H1 (cell line): ENCODE measurements at regions of chr5 and their contacts with region 1.

Region 1: GRCh38 chr5:99060306-99061261 is 131.8 kb upstream of the CHD1 start:
- DNase-seq: peak; percentile 15 to 87
- H3K4me3 ChIP-seq: no peak overlapping the region
- H3K27ac ChIP-seq: peak overlapping the region; percentile 33; the same call in 1 of the 2 replicates
- H3K4me1 ChIP-seq: no peaks in the 10 kb centered on the region
- H3K27me3 ChIP-seq: no peaks in the 10 kb centered on the region
- CTCF ChIP-seq: peak; percentile 24 to 77 (median 75)
- EP300 ChIP-seq: no peak
- POLR2A ChIP-seq: no peak
- RAD21 ChIP-seq: peak; percentile 86 to 90

Region 2: DNA sequence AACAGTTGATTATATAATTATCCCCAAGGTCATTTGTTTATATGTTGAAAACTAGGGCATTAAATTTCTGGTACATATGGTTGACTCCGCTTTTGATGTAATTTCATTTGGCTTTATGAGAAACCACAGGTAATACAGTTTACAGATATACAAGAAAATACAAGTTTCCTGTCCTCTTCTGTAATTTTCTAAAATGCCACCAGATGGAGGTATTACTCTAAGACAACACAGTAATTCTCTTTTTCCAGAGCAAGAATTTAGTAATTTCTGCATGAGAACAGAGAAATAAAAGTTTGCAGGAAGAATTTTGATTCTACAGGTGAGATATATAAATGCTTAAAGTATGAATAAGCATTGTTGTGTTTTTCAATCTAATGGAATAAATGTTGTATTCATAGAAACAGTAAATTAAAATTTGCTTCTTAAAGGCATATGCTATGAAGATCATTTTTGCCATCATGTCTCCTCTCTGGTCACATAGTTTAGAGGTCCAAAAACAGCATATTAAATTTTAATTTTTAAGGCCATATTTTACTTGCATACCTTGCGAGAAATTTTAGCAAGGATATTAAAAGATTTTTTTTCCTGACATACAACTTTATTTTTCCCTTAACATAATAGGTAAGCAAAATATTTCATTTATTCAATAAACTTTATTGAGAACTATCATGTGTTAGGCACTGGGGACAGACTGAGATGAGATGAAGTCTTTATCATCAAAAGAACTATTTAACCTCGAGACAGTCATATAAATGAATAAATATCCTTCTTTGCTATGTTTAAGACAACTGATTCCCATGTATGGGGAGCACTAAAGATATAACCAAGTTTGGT is 154.5 kb before region 1 on chr5:
- CTCF ChIA-PET with region 1: interaction called, 22 read pairs
- POLR2A ChIA-PET with region 1: no interaction called
- DNase-seq: no peak
- H3K4me3 ChIP-seq: no peak overlapping the region
- H3K27ac ChIP-seq: no peak overlapping the region
- H3K4me1 ChIP-seq: peaks cover 0 to 3% (median 0%) of the 10 kb centered on the region in 4 experiments; a peak in 1 of 7 replicates
- H3K27me3 ChIP-seq: no peaks in the 10 kb centered on the region
- CTCF ChIP-seq: peak in 2 of 3 experiments; percentile 30 to 39; a peak in 2 of 4 replicates
- EP300 ChIP-seq: no peak
- POLR2A ChIP-seq: no peak
- RAD21 ChIP-seq: peak in 1 of 2 experiments; percentile 77

Region 3: DNA sequence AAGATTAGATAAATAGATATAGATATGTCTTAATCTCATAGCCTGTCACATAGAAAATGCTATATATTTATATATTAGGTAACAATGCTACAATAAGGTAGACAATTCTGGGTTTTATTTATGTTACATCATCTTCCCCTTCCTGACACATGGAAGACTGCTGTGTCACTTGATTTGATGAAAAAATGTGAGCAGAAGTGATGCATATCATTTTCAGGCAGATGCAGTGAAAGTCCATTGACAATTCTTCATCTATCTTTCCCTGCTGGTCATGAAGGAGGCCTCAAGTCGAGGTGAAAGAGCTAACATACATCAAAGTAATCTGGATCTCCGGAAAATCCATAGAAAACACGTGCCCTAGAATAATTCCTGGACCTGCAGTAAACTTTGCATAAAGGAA is 74.0 kb before region 1 on chr5:
- CTCF ChIA-PET with region 1: no interaction called
- POLR2A ChIA-PET with region 1: no interaction called
- DNase-seq: no peak
- H3K4me3 ChIP-seq: no peak overlapping the region
- H3K27ac ChIP-seq: no peak overlapping the region
- H3K4me1 ChIP-seq: no peaks in the 10 kb centered on the region
- H3K27me3 ChIP-seq: no peaks in the 10 kb centered on the region
- CTCF ChIP-seq: no peak
- EP300 ChIP-seq: no peak
- POLR2A ChIP-seq: no peak
- RAD21 ChIP-seq: no peak

Region 4: DNA sequence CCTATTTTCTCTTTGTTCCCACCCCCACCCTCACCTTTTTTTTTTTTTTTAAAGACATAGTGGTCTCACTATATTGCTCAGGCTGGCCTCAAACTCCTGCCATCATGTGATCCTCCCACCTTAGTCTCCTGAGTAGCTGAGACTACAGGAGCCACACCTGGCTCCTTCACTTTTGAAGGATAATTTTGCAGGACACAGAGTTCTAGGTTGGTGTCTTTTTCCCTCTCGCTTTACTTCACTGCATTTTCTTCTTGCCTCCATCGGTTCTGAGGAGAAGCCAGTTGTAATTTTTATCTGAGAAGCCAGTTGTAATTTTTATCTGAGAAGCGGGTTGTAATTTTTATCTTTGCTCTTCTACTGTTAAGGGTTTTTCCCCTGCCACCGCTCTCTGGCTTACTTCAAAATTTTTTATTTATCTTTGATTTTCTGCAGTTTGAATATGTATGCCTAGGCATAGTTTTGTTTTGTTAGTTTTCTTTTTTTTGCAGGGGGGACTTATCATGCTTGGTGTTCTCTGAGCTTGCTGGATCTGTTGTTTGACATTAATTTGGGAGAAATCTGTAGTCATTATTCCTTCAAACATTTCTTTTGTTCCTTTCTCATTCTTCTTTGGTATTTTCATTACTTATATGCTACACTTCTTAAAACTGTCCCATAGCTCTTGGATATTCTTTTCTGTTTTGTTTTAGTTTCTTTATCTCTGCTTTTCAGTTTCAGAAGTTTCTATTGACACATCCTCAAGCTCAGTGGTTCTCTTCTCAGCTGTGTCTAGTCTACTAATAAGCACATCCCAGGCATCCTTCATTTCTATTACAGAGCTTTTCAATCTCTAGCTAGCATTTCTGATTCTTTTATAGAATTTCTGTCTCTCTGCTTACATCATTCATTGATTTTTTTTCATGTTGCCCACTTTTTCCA is 16.4 kb after region 1 on chr5:
- CTCF ChIA-PET with region 1: interaction called, 12 read pairs
- POLR2A ChIA-PET with region 1: no interaction called
- DNase-seq: no peak
- H3K4me3 ChIP-seq: no peak overlapping the region
- H3K27ac ChIP-seq: no peak overlapping the region
- H3K4me1 ChIP-seq: no peaks in the 10 kb centered on the region
- H3K27me3 ChIP-seq: no peaks in the 10 kb centered on the region
- CTCF ChIP-seq: no peak
- EP300 ChIP-seq: no peak
- POLR2A ChIP-seq: no peak
- RAD21 ChIP-seq: no peak

Region 5: GRCh38 chr5:99141534-99142128 is 81.0 kb after region 1 on chr5:
- CTCF ChIA-PET with region 1: no interaction called
- POLR2A ChIA-PET with region 1: no interaction called
- DNase-seq: no peak
- H3K4me3 ChIP-seq: no peak overlapping the region
- H3K27ac ChIP-seq: no peak overlapping the region
- H3K4me1 ChIP-seq: no peaks in the 10 kb centered on the region
- H3K27me3 ChIP-seq: no peaks in the 10 kb centered on the region
- CTCF ChIP-seq: no peak
- EP300 ChIP-seq: no peak
- POLR2A ChIP-seq: no peak
- RAD21 ChIP-seq: peak; percentile 29 to 32